B cell (primary cell): ENCODE measurements at regions of chr11 and their contacts with region 1.

Region 1: GRCh38 chr11:121591405-121592033 is 138.8 kb upstream of the SORL1-AS1 start:
- DNase-seq: peak; percentile 86
- ATAC-seq: peak; percentile 46
- H3K4me3 ChIP-seq: no peak overlapping the region
- H3K4me3 Mint-ChIP-seq: peak overlapping the region; percentile 47
- H3K27ac ChIP-seq: no peak overlapping the region
- H3K27ac Mint-ChIP-seq: peak overlapping the region; percentile 68
- H3K4me1 ChIP-seq: peaks cover 31 to 32% of the 10 kb centered on the region in 2 donors
- H3K4me1 Mint-ChIP-seq: peaks cover 35% of the 10 kb centered on the region
- H3K27me3 ChIP-seq: no peaks in the 10 kb centered on the region
- H3K27me3 Mint-ChIP-seq: no peaks in the 10 kb centered on the region
- CTCF ChIP-seq: peak; percentile 88

Region 2: GRCh38 chr11:121194731-121195596 is 396.6 kb before region 1 on chr11:
- CTCF ChIA-PET with region 1: interaction called, 11 read pairs
- POLR2A ChIA-PET with region 1: no interaction called
- intact Hi-C with region 1: loop called (anchors 2 kb)
- DNase-seq: peak; percentile 77
- ATAC-seq: peak; percentile 63
- H3K4me3 ChIP-seq: no peak overlapping the region
- H3K4me3 Mint-ChIP-seq: no peak overlapping the region
- H3K27ac ChIP-seq: no peak overlapping the region
- H3K27ac Mint-ChIP-seq: no peak overlapping the region
- H3K4me1 ChIP-seq: peaks cover 5% of the 10 kb centered on the region in 2 donors
- H3K4me1 Mint-ChIP-seq: peaks cover 8% of the 10 kb centered on the region
- H3K27me3 ChIP-seq: peaks cover 0 to 28% (median 0%) of the 10 kb centered on the region in 4 experiments
- H3K27me3 Mint-ChIP-seq: peaks cover 35% of the 10 kb centered on the region
- CTCF ChIP-seq: peak; percentile 96

Region 3: GRCh38 chr11:121292495-121293287 is 298.8 kb before region 1 on chr11 and contains the start of gene SC5D:
- CTCF ChIA-PET with region 1: interaction called, 8 read pairs
- POLR2A ChIA-PET with region 1: no interaction called
- intact Hi-C with region 1: loop called (anchors 1 kb)
- DNase-seq: peak; percentile 97
- ATAC-seq: peak; percentile 82
- H3K4me3 ChIP-seq: peak within 1 kb of the TSS; percentile 69 to 96 (median 89)
- H3K4me3 Mint-ChIP-seq: peak within 1 kb of the TSS; percentile 94
- H3K27ac ChIP-seq: peak within 1 kb of the TSS; percentile 93
- H3K27ac Mint-ChIP-seq: peak within 1 kb of the TSS; percentile 97
- H3K4me1 ChIP-seq: peaks cover 9 to 12% of the 10 kb centered on the region in 2 donors
- H3K4me1 Mint-ChIP-seq: peaks cover 55% of the 10 kb centered on the region
- H3K27me3 ChIP-seq: no peaks in the 10 kb centered on the region
- H3K27me3 Mint-ChIP-seq: no peaks in the 10 kb centered on the region
- CTCF ChIP-seq: no peak
- total RNA-seq, gene SC5D: 54.3 and 54.8 TPM in 2 replicates

Region 4: DNA sequence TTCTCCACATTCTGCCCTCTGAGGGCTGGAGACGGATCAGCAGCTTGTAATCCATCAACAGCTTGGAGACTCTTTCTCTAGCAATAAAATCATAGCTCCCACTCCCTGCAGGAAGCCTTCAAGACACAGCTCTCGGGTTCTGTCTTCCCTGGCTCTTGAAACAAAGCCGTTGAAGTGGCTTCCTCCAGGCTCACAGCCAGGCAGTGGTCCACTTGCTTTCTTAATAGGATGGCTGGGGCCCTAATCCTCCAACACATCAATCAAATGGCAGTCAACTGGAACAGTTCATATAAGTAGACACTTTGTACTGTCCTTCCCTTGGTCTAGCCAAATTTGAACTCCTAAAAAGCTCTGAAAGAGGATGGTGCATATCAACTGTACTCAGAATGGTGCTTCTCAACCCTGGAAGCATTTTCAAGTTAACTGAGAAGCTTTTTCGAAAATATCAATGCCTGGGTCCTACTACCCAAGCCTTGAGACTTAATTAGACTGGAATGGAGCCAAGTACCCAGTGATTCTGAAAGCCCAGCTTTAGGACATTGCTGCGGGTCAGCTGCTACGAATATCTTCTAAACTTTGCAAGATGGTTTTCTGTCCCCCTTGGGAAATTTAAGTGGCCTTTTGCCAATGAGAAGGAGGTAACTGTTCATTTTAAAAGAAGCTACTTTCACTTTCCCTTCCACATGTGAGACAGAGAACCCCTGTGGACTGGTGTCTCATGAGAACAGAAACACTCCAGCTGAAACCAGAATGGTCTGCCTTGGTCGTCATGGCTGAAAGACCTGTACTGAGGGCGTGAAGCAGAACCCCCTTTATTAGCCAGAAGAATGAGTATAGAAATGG is 224.3 kb before region 1 on chr11:
- CTCF ChIA-PET with region 1: interaction called, 14 read pairs
- POLR2A ChIA-PET with region 1: no interaction called
- intact Hi-C with region 1: loop called (anchors 1 kb)
- DNase-seq: peak; percentile 89
- ATAC-seq: peak; percentile 98
- H3K4me3 ChIP-seq: peak overlapping the region in 3 of 5 experiments; percentile 33 to 40 (median 34)
- H3K4me3 Mint-ChIP-seq: peak overlapping the region; percentile 73
- H3K27ac ChIP-seq: peak overlapping the region; percentile 40 to 52
- H3K27ac Mint-ChIP-seq: peak overlapping the region; percentile 81
- H3K4me1 ChIP-seq: peaks cover 20 to 23% of the 10 kb centered on the region in 2 donors
- H3K4me1 Mint-ChIP-seq: peaks cover 40% of the 10 kb centered on the region
- H3K27me3 ChIP-seq: no peaks in the 10 kb centered on the region
- H3K27me3 Mint-ChIP-seq: peaks cover 4% of the 10 kb centered on the region
- CTCF ChIP-seq: no peak

Region 5: DNA sequence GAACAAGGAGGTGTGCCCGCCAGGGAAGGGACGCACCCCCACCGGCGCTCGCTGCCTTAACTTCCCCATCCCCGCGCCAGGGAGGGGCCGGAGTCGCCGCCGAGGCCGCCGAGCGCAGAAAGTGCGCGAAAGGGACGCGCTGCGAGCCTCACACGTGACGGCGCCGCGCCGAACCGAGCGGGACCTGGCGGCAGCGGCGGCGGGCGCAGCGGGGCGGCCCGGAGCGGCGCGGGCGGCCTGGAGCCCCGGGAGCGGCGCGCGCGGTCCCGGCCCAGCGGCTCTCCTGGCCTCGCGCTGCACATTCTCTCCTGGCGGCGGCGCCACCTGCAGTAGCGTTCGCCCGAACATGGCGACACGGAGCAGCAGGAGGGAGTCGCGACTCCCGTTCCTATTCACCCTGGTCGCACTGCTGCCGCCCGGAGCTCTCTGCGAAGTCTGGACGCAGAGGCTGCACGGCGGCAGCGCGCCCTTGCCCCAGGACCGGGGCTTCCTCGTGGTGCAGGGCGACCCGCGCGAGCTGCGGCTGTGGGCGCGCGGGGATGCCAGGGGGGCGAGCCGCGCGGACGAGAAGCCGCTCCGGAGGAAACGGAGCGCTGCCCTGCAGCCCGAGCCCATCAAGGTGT is 139.4 kb before region 1 on chr11 and contains the start of gene SORL1:
- CTCF ChIA-PET with region 1: interaction called, 12 read pairs
- POLR2A ChIA-PET with region 1: interaction called, 4 read pairs
- intact Hi-C with region 1: loop called (anchors 2 kb)
- DNase-seq: peak; percentile 78
- ATAC-seq: peak; percentile 54
- H3K4me3 ChIP-seq: peak within 1 kb of the TSS; percentile 63 to 95 (median 76)
- H3K4me3 Mint-ChIP-seq: peak within 1 kb of the TSS; percentile 96
- H3K27ac ChIP-seq: peak within 1 kb of the TSS; percentile 61 to 74
- H3K27ac Mint-ChIP-seq: peak within 1 kb of the TSS; percentile 85
- H3K4me1 ChIP-seq: peaks cover 68 to 71% of the 10 kb centered on the region in 2 donors
- H3K4me1 Mint-ChIP-seq: peaks cover 85% of the 10 kb centered on the region
- H3K27me3 ChIP-seq: peaks cover 0 to 4% (median 0%) of the 10 kb centered on the region in 4 experiments
- H3K27me3 Mint-ChIP-seq: no peaks in the 10 kb centered on the region
- CTCF ChIP-seq: peak; percentile 48
- total RNA-seq, gene SORL1: 396 and 414 TPM in 2 replicates

Region 6: GRCh38 chr11:121570453-121570852 is 21.1 kb before region 1 on chr11:
- CTCF ChIA-PET with region 1: interaction called, 3 read pairs
- POLR2A ChIA-PET with region 1: no interaction called
- intact Hi-C with region 1: loop called (anchors 1 kb)
- DNase-seq: peak; percentile 19
- ATAC-seq: no peak
- H3K4me3 ChIP-seq: no peak overlapping the region
- H3K4me3 Mint-ChIP-seq: no peak overlapping the region
- H3K27ac ChIP-seq: peak overlapping the region in 1 of 2 donors; percentile 42
- H3K27ac Mint-ChIP-seq: no peak overlapping the region
- H3K4me1 ChIP-seq: peaks cover 8 to 38% of the 10 kb centered on the region in 2 donors
- H3K4me1 Mint-ChIP-seq: peaks cover 43% of the 10 kb centered on the region
- H3K27me3 ChIP-seq: peaks cover 0 to 19% (median 2%) of the 10 kb centered on the region in 4 experiments
- H3K27me3 Mint-ChIP-seq: peaks cover 21% of the 10 kb centered on the region
- CTCF ChIP-seq: no peak